CD8-positive, alpha-beta memory T cell (primary cell): ENCODE measurements at regions of chr11 and their contacts with region 1.

Region 1: DNA sequence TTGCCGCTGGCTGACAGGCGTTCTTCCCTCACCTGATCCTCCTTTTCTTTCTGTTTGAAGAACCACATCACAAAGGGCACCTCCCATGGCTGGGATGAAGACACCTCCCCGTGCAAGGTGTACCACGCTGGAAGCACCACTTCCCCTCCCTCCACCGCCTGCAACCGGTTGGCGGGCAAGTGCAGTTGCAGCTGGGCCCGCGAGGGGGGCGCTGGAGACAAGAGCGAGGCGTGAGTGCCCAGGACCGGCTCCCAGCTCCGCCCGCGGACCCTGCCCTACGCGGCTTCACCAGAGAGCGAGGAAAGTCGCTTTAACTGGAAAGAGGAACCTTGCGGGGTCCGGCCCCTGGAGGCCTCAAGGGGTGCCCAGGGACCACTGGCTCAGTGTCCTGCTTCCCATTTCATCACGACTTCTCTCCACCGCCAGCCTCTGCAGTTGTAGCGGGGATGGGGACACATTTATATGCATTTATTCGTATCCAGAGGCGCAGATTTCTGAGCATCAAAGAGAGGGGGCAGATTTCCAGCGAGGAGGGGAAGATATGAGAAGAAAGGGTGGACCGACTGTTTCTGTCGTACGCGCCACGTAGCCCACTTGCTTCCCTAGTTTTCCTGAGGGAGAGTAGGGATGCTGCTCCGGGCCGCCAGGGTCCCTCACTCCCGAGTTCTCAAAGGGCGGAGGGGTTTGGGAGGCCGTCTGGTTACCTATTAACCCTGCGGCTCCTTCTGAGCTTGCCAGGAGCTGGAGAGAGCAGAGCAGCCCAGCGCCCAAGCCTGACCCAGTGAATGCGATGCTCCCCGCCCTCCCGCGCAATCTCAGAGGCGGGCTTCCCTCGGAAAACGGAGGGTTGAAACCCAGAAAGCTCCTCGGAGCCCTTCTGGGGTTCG is 3.5 kb downstream of the ESAM start:
- DNase-seq: peak; percentile 45 to 74 (median 51)
- H3K4me3 ChIP-seq: peak overlapping the region; percentile 8
- H3K4me3 Mint-ChIP-seq: peak overlapping the region in 6 of 7 donors; percentile 4 to 71 (median 50)
- H3K27ac ChIP-seq: no peak overlapping the region
- H3K27ac Mint-ChIP-seq: peak overlapping the region in 1 of 8 donors; percentile 47
- H3K4me1 ChIP-seq: peaks cover 31% of the 10 kb centered on the region
- H3K4me1 Mint-ChIP-seq: peaks cover 14 to 39% (median 17%) of the 10 kb centered on the region in 3 donors
- H3K27me3 ChIP-seq: peaks cover 44% of the 10 kb centered on the region
- H3K27me3 Mint-ChIP-seq: peaks cover 44 to 62% of the 10 kb centered on the region in 2 donors

Region 2: DNA sequence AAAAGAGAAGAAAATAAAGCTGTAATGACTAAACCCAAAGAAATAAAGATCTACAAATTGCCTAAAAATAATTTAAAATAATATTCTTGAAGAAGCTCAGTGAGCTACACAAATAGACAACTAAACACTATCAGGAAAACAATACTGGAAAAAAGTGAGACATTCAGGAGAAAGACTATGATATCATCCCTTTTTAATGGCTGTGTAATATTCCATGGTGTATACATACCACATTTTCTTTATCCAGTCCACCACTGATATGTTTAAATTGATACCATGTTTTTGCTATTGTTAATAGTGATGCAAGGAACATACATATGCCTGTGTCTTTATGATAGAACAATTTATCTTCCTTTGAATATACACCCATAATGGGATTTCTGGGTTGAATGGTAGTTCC is 801.8 kb before region 1 on chr11:
- CTCF ChIA-PET with region 1: no interaction called
- POLR2A ChIA-PET with region 1: no interaction called
- DNase-seq: no peak
- H3K4me3 ChIP-seq: no peak overlapping the region
- H3K4me3 Mint-ChIP-seq: no peak overlapping the region
- H3K27ac ChIP-seq: no peak overlapping the region
- H3K27ac Mint-ChIP-seq: no peak overlapping the region
- H3K4me1 ChIP-seq: no peaks in the 10 kb centered on the region
- H3K4me1 Mint-ChIP-seq: no peaks in the 10 kb centered on the region
- H3K27me3 ChIP-seq: no peaks in the 10 kb centered on the region
- H3K27me3 Mint-ChIP-seq: peaks cover 0 to 1% of the 10 kb centered on the region in 2 donors

Region 3: DNA sequence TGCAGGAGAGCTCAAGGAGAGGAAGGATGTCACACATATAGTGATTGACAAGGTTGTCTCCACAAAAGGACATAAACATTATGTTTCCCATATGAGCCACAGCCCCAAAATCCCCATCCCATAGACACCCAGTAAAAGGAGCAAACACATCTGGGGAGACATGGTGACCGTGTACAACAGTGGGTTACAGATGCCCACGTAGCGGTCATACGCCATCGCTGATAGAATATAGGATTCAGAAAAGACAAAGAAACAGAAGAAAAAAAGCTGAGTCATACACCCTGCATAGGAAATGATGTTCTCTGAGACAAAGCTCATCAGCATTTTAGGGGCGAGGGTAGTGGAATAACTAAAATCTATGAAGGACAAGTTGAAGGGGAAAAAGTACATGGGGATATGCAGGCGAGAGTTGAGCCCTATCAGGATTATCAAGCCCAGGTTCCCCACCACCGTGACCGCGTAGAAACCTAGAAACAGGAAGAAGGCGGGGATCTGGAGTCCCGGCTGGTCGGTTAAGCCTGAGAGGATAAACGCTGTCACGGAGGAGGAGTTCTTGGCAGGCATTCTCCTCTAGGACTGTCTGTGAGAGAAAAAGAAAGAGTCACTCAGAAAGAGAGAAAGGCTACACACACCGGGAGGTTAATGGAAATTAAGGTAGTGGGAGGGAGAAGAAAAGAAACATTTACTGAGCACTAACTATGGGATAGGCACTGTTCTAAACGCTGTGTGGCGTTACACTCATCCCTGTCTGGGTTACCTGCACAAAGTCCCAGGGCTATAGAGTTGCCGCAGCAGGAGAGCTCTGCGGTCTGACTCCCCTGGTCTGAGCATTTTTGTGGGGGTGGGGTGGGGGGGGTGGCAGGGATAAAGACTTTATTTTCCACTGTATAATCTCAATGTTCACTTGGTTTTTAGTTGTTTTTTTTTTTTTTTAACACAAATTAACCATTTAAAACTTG is 276.9 kb before region 1 on chr11:
- CTCF ChIA-PET with region 1: no interaction called
- POLR2A ChIA-PET with region 1: no interaction called
- DNase-seq: no peak
- H3K4me3 ChIP-seq: no peak overlapping the region
- H3K4me3 Mint-ChIP-seq: peak overlapping the region in 5 of 7 donors; percentile 24 to 52 (median 33)
- H3K27ac ChIP-seq: peak overlapping the region; percentile 12
- H3K27ac Mint-ChIP-seq: no peak overlapping the region
- H3K4me1 ChIP-seq: no peaks in the 10 kb centered on the region
- H3K4me1 Mint-ChIP-seq: peaks cover 6 to 11% (median 11%) of the 10 kb centered on the region in 3 donors
- H3K27me3 ChIP-seq: no peaks in the 10 kb centered on the region
- H3K27me3 Mint-ChIP-seq: peaks cover 7 to 8% of the 10 kb centered on the region in 2 donors

Region 4: GRCh38 chr11:124673333-124674167 is 85.0 kb before region 1 on chr11 and contains the starts of genes SIAE and SPA17:
- CTCF ChIA-PET with region 1: interaction called, 90 read pairs
- POLR2A ChIA-PET with region 1: interaction called, 4 read pairs
- DNase-seq: peak; percentile 75 to 90 (median 86)
- H3K4me3 ChIP-seq: peak within 1 kb of the TSS; percentile 74
- H3K4me3 Mint-ChIP-seq: peak within 1 kb of the TSS; percentile 89 to 95 (median 91)
- H3K27ac ChIP-seq: peak within 1 kb of the TSS; percentile 71
- H3K27ac Mint-ChIP-seq: peak within 1 kb of the TSS in 7 of 8 donors; percentile 97 to 99 (median 98)
- H3K4me1 ChIP-seq: peaks cover 36% of the 10 kb centered on the region
- H3K4me1 Mint-ChIP-seq: peaks cover 25 to 36% (median 33%) of the 10 kb centered on the region in 3 donors
- H3K27me3 ChIP-seq: no peaks in the 10 kb centered on the region
- H3K27me3 Mint-ChIP-seq: peaks cover 9 to 17% of the 10 kb centered on the region in 2 donors
- total RNA-seq, gene SIAE: 4.0 to 5.2 TPM
- total RNA-seq, gene SPA17: 2.2 to 3.9 TPM

Region 5: GRCh38 chr11:124707829-124708228 is 50.7 kb before region 1 on chr11:
- CTCF ChIA-PET with region 1: no interaction called
- POLR2A ChIA-PET with region 1: no interaction called
- DNase-seq: no peak
- H3K4me3 ChIP-seq: no peak overlapping the region
- H3K4me3 Mint-ChIP-seq: no peak overlapping the region
- H3K27ac ChIP-seq: no peak overlapping the region
- H3K27ac Mint-ChIP-seq: no peak overlapping the region
- H3K4me1 ChIP-seq: no peaks in the 10 kb centered on the region
- H3K4me1 Mint-ChIP-seq: no peaks in the 10 kb centered on the region
- H3K27me3 ChIP-seq: no peaks in the 10 kb centered on the region
- H3K27me3 Mint-ChIP-seq: peaks cover 11 to 41% of the 10 kb centered on the region in 2 donors

Region 6: DNA sequence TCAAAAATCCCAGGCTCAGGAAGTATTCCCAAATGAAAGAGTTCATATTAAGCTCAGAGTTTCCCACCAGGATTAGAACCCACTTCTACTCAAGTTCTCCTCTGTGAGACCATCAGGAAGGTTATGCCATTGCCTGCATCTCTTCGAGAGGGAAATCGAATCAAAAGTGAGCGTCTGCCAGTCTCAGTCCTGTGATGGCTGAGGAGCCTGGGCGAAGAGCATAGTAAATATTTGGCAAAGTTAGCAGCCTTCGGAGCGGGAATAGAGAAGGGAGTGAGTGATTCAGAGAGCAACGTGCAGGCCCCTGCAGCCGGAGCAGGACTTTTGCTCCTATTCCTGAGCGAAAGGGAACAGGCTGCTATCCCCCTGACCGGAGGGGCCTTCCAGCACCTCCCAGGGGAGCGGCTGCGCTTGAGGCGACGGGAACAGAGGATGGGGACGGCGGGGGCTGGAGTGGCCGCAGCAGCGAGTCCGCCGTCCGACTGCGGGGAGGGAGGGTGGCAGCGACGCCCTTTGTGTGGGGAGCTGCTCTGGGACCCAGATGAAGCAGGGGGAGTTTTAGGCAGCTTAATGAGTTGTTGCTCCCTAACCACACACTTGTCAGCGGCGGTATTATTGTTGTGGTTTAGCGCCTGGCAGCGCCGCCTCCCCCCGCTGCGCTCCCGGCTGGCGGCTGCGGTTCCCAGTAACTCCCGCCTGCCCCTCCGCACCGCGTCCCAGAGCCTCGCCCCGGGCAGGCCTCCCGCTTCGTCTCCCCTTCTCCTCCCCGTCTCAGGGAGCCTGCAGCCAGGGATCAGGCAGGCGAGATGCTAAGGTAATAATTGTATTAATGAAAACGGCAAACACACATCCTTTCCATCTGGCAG is 40.5 kb before region 1 on chr11:
- CTCF ChIA-PET with region 1: no interaction called
- POLR2A ChIA-PET with region 1: no interaction called
- DNase-seq: peak in 4 of 5 donors; percentile 8 to 36 (median 22)
- H3K4me3 ChIP-seq: peak overlapping the region; percentile 41
- H3K4me3 Mint-ChIP-seq: peak overlapping the region in 6 of 7 donors; percentile 66 to 84 (median 74)
- H3K27ac ChIP-seq: no peak overlapping the region
- H3K27ac Mint-ChIP-seq: peak overlapping the region in 2 of 8 donors; percentile 4 to 41
- H3K4me1 ChIP-seq: peaks cover 14% of the 10 kb centered on the region
- H3K4me1 Mint-ChIP-seq: peaks cover 13 to 18% (median 17%) of the 10 kb centered on the region in 3 donors
- H3K27me3 ChIP-seq: peaks cover 16% of the 10 kb centered on the region
- H3K27me3 Mint-ChIP-seq: peaks cover 29 to 58% of the 10 kb centered on the region in 2 donors

Region 7: DNA sequence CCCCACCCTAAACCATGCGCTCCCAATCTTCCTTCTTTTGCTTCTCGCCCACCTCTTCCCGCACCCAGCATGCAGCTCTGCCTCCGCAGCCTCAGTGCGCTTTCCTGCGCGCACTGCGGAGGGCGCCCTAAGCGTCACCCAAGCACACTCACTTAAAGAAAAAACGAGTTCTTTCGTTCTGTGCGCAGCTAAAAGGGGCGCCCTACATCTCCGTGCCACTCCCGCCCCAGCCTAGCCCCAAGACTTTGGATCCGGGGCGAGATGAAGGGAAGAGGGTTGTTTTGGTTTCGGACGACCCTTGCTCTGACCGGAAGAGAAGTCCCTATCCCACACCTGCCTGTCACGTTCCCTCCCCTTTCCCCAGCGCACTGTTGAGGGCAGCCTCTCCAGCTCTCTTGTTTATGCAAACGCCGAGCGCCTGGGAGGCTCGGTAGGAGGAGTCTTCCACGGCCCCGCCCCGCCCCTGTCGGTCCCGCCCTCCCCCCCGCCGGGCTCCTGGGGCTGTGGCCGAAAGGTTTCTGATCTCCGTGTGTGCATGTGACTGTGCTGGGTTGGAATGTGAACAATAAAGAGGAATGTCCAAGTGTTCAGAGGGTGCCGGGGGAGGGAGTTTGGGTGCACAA is 11.8 kb before region 1 on chr11:
- CTCF ChIA-PET with region 1: interaction called, 73 read pairs
- POLR2A ChIA-PET with region 1: interaction called, 22 read pairs
- DNase-seq: peak; percentile 71 to 86 (median 81)
- H3K4me3 ChIP-seq: peak overlapping the region; percentile 97
- H3K4me3 Mint-ChIP-seq: peak overlapping the region; percentile 90 to 97 (median 95)
- H3K27ac ChIP-seq: peak overlapping the region; percentile 76
- H3K27ac Mint-ChIP-seq: peak overlapping the region; percentile 46 to 93 (median 90)
- H3K4me1 ChIP-seq: peaks cover 9% of the 10 kb centered on the region
- H3K4me1 Mint-ChIP-seq: peaks cover 4 to 14% (median 7%) of the 10 kb centered on the region in 3 donors
- H3K27me3 ChIP-seq: no peaks in the 10 kb centered on the region
- H3K27me3 Mint-ChIP-seq: peaks cover 8 to 14% of the 10 kb centered on the region in 2 donors

Region 8: GRCh38 chr11:124793466-124794278 is 35.1 kb after region 1 on chr11:
- CTCF ChIA-PET with region 1: interaction called, 40 read pairs
- POLR2A ChIA-PET with region 1: no interaction called
- DNase-seq: peak in 2 of 5 donors; percentile 17 to 33
- H3K4me3 ChIP-seq: no peak overlapping the region
- H3K4me3 Mint-ChIP-seq: no peak overlapping the region
- H3K27ac ChIP-seq: no peak overlapping the region
- H3K27ac Mint-ChIP-seq: no peak overlapping the region
- H3K4me1 ChIP-seq: peaks cover 13% of the 10 kb centered on the region
- H3K4me1 Mint-ChIP-seq: peaks cover 32 to 62% (median 45%) of the 10 kb centered on the region in 3 donors
- H3K27me3 ChIP-seq: no peaks in the 10 kb centered on the region
- H3K27me3 Mint-ChIP-seq: no peaks in the 10 kb centered on the region

Region 9: DNA sequence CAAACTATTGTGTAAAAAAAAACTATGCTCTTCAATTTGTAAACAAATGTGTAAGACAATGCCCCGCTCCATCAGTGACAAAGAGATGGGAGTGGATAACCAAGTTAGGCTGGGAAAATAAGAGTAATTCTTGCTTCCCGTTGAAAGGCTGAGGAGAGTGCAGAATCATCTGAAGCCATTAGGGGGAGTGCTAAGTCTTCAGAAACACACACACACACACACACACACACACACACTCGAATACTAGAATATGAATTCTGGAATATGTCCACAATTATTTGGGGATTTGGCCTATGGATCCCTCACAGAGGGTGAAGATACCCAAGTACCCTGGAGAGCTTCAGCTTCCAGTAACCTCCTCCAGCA is 78.9 kb after region 1 on chr11:
- CTCF ChIA-PET with region 1: interaction called, 14 read pairs
- POLR2A ChIA-PET with region 1: no interaction called
- DNase-seq: no peak
- H3K4me3 ChIP-seq: no peak overlapping the region
- H3K4me3 Mint-ChIP-seq: peak overlapping the region in 1 of 7 donors; percentile 58
- H3K27ac ChIP-seq: no peak overlapping the region
- H3K27ac Mint-ChIP-seq: no peak overlapping the region
- H3K4me1 ChIP-seq: no peaks in the 10 kb centered on the region
- H3K4me1 Mint-ChIP-seq: peaks cover 13 to 20% (median 16%) of the 10 kb centered on the region in 3 donors
- H3K27me3 ChIP-seq: peaks cover 47% of the 10 kb centered on the region
- H3K27me3 Mint-ChIP-seq: peaks cover 58 to 69% of the 10 kb centered on the region in 2 donors